Prostate gland (tissue), 2 donors: ENCODE measurements at regions of chr6 and their contacts with region 1.

Region 1: GRCh38 chr6:109482905-109483735 is at the start of gene ZBTB24:
- DNase-seq: peak; percentile 91
- H3K4me3 ChIP-seq: peak within 1 kb of the TSS; percentile 97 to 99
- H3K27ac ChIP-seq: peak within 1 kb of the TSS; percentile 75 to 76
- H3K4me1 ChIP-seq: peaks cover 4% of the 10 kb centered on the region
- H3K27me3 ChIP-seq: no peaks in the 10 kb centered on the region
- CTCF ChIP-seq: peak in 2 of 4 experiments; percentile 4 to 8
- POLR2A ChIP-seq: peak; percentile 51
- total RNA-seq, gene ZBTB24: 8.2 to 12.8 TPM

Region 2: GRCh38 chr6:109440331-109441068 is 42.6 kb before region 1 on chr6 and contains the starts of genes PPIL6 and SMPD2:
- intact Hi-C with region 1: loop called (anchors 2 kb)
- DNase-seq: peak; percentile 86
- H3K4me3 ChIP-seq: peak within 1 kb of the TSS; percentile 46 to 58
- H3K27ac ChIP-seq: peak within 1 kb of the TSS; percentile 80 to 81
- H3K4me1 ChIP-seq: no peaks in the 10 kb centered on the region
- H3K27me3 ChIP-seq: no peaks in the 10 kb centered on the region
- CTCF ChIP-seq: peak in 3 of 4 experiments; percentile 9 to 37 (median 34)
- POLR2A ChIP-seq: peak; percentile 59
- total RNA-seq, gene PPIL6: 4.2 to 6.0 TPM
- total RNA-seq, gene SMPD2: 10.2 to 24.2 TPM

Region 3: GRCh38 chr6:109455502-109456282 is 27.4 kb before region 1 on chr6 and contains the start of gene MICAL1:
- intact Hi-C with region 1: no loop called
- DNase-seq: peak; percentile 41
- H3K4me3 ChIP-seq: peak within 1 kb of the TSS; percentile 64 to 65
- H3K27ac ChIP-seq: peak within 1 kb of the TSS; percentile 49 to 69
- H3K4me1 ChIP-seq: no peaks in the 10 kb centered on the region
- H3K27me3 ChIP-seq: no peaks in the 10 kb centered on the region
- CTCF ChIP-seq: peak in 2 of 4 experiments; percentile 24 to 32
- POLR2A ChIP-seq: peak; percentile 25
- total RNA-seq, gene MICAL1: 13.9 to 55.4 TPM